AG04449 (cell line): ENCODE measurements at regions of chr7 and their contacts with region 1.

Region 1: GRCh38 chr7:149686002-149686401 is 87.4 kb downstream of the ZNF467 start:
- DNase-seq: peak; percentile 52
- H3K4me3 ChIP-seq: no peak overlapping the region
- CTCF ChIP-seq: no peak

Region 2: DNA sequence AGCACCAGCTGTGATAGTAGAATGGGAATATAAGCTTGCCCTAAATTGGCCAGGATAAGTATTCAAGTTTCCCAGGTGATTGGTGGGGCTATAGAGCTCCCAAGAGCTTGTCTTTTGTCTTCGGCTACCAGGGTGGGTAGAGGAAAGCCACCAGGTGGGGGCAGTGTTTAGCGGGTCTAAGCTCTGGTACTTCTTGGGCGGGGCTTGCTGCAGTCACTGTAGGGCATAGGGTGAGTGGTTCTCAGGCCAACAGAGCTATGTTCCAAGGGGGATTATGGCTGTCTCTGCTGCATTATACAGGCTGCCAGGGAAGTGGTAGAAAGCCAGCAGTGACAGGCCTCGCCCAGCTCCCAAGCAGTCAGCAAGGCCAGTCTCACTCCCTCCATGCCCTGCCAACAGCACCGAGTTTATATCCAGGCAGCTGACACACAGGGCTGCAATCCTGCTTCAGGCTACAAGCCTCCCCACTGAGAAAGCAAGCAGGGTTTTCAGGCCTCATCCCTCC is 23.4 kb before region 1 on chr7:
- CTCF ChIA-PET with region 1: interaction called, 11 read pairs
- POLR2A ChIA-PET with region 1: no interaction called
- DNase-seq: no peak
- H3K4me3 ChIP-seq: no peak overlapping the region
- CTCF ChIP-seq: peak; percentile 55

Region 3: DNA sequence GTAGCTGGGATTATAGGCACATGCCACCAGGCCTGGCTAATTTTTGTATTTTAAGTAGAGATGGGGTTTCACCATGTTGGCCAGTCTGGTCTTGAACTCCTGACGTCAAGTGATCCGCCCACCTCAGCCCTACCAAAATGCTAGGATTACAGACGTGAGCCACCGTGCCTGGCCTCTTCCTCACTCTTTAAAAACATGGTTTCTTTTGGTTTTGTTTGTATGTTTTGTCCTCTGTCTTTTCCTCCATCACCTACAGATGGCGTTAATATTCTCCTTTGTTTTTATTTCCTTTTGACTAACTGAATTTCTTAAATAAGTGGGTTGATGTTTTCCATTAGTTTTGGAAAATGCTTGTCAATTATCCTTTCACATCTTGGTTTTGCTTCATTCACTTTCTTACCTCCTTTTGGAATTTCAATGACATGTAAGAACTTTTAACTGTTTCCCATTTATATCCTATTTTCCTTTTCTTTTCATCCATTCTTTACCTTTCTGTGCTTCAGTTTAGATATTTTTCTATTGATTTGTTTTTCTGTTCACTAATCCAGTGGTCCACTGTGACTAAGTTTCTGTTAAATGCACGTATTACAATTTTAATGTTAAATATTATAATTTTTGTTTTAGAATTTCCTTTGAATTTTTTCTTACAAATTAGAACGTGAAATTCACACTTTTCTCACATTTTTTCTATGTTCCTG is 16.7 kb before region 1 on chr7:
- CTCF ChIA-PET with region 1: interaction called, 13 read pairs
- POLR2A ChIA-PET with region 1: no interaction called
- DNase-seq: no peak
- H3K4me3 ChIP-seq: no peak overlapping the region
- CTCF ChIP-seq: peak; percentile 17